MCF 10A (cell line): ENCODE measurements at regions of chr5 and their contacts with region 1.

Region 1: DNA sequence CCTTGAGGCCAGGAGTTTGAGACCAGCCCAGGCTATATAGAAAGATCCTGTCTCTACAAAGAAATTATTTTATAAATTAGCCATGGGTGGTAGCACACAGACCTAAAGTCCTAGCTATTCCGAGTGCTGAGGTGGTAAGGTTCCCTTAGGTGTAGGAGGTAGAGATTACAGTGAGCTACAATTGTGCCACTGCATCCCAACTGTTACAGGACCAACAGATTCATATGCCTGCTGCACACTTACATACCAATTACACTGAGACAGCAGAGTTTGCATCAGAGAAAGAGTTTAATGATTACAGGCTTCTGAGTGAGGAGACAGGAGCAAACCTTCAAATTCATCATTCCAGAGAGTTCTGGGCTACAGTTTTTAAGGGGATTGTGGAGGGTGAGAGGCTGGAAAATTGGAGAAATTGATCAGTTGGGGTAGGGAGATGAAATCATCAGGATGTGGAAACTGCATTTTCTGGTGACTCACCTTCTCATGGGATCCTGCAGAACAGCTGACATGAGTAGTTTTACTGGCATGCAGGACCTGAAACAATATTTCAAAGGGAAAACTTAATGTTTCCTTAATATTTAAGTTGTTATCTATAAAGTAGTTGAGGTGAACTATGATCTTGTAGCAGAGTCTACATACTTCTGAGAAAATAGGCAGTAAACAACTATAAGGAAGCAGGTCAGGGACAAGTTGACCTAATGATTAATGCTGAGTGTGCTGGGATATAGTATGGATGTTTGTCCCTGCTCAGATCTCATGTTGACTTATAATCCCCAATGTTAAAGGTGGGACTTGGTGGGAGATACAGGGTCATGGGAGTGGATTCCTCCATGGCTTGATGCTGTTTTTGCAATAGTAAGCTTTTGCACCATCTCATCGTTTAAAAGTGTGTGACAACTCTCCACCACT is 54.7 kb downstream of the ANXA2R start:
- DNase-seq: peak; percentile 66
- H3K4me3 Mint-ChIP-seq: no peak overlapping the region
- H3K27ac Mint-ChIP-seq: peak overlapping the region; percentile 89
- H3K4me1 Mint-ChIP-seq: peaks cover 20% of the 10 kb centered on the region
- H3K27me3 Mint-ChIP-seq: no peaks in the 10 kb centered on the region
- CTCF ChIP-seq: no peak

Region 2: GRCh38 chr5:42950440-42951292 is 34.7 kb before region 1 on chr5:
- CTCF ChIA-PET with region 1: interaction called, 4 read pairs
- POLR2A ChIA-PET with region 1: interaction called, 3 read pairs
- intact Hi-C with region 1: loop called (anchors 2 kb)
- DNase-seq: peak; percentile 98
- H3K4me3 Mint-ChIP-seq: peak overlapping the region; percentile 47
- H3K27ac Mint-ChIP-seq: peak overlapping the region; percentile 85
- H3K4me1 Mint-ChIP-seq: no peaks in the 10 kb centered on the region
- H3K27me3 Mint-ChIP-seq: no peaks in the 10 kb centered on the region
- CTCF ChIP-seq: no peak

Region 3: GRCh38 chr5:43019614-43020293 is 34.4 kb after region 1 on chr5:
- CTCF ChIA-PET with region 1: no interaction called
- POLR2A ChIA-PET with region 1: no interaction called
- intact Hi-C with region 1: no loop called
- DNase-seq: no peak
- H3K4me3 Mint-ChIP-seq: no peak overlapping the region
- H3K27ac Mint-ChIP-seq: no peak overlapping the region
- H3K4me1 Mint-ChIP-seq: no peaks in the 10 kb centered on the region
- H3K27me3 Mint-ChIP-seq: no peaks in the 10 kb centered on the region
- CTCF ChIP-seq: no peak

Region 4: GRCh38 chr5:43040287-43041098 is 55.1 kb after region 1 on chr5 and contains the start of gene ANXA2R:
- CTCF ChIA-PET with region 1: interaction called, 4 read pairs
- POLR2A ChIA-PET with region 1: interaction called, 18 read pairs
- intact Hi-C with region 1: loop called (anchors 2 kb)
- DNase-seq: no peak
- H3K4me3 Mint-ChIP-seq: peak within 1 kb of the TSS; percentile 88
- H3K27ac Mint-ChIP-seq: peak within 1 kb of the TSS; percentile 95
- H3K4me1 Mint-ChIP-seq: no peaks in the 10 kb centered on the region
- H3K27me3 Mint-ChIP-seq: no peaks in the 10 kb centered on the region
- CTCF ChIP-seq: no peak
- total RNA-seq, gene ANXA2R: 0.98 and 1.3 TPM in 2 replicates

Region 5: GRCh38 chr5:43066799-43067741 is 81.7 kb after region 1 on chr5:
- CTCF ChIA-PET with region 1: interaction called, 5 read pairs
- POLR2A ChIA-PET with region 1: interaction called, 15 read pairs
- intact Hi-C with region 1: no loop called
- DNase-seq: peak; percentile 91
- H3K4me3 Mint-ChIP-seq: peak overlapping the region; percentile 99
- H3K27ac Mint-ChIP-seq: peak overlapping the region; percentile 93
- H3K4me1 Mint-ChIP-seq: peaks cover 12% of the 10 kb centered on the region
- H3K27me3 Mint-ChIP-seq: no peaks in the 10 kb centered on the region
- CTCF ChIP-seq: no peak